K562 (cell line): ENCODE measurements at regions of chr17 and their contacts with region 1.

Region 1: GRCh38 chr17:3683054-3683511 is 12.9 kb downstream of the P2RX5 start:
- DNase-seq: peak; percentile 52 to 74 (median 65)
- ATAC-seq: peak; percentile 90
- H3K4me3 ChIP-seq: no peak overlapping the region
- H3K27ac ChIP-seq: no peak overlapping the region
- H3K4me1 ChIP-seq: peaks cover 0 to 21% of the 10 kb centered on the region in 2 experiments; a peak in 2 of 5 replicates
- H3K27me3 ChIP-seq: peaks cover 0 to 17% of the 10 kb centered on the region in 2 experiments; a peak in 2 of 5 replicates
- CTCF ChIP-seq: peak; percentile 69 to 89 (median 85)
- EP300 ChIP-seq: no peak
- POLR2A ChIP-seq: no peak
- RAD21 ChIP-seq: peak; percentile 65 to 72

Region 2: GRCh38 chr17:3048767-3049471 is 634.2 kb before region 1 on chr17:
- CTCF ChIA-PET with region 1: no interaction called
- POLR2A ChIA-PET with region 1: no interaction called
- in situ Hi-C with region 1: no loop called
- intact Hi-C with region 1: loop called (anchors 10 kb)
- DNase-seq: peak; percentile 58 to 68 (median 62)
- ATAC-seq: peak; percentile 99
- H3K4me3 ChIP-seq: no peak overlapping the region
- H3K27ac ChIP-seq: no peak overlapping the region
- H3K4me1 ChIP-seq: peaks cover 0 to 9% of the 10 kb centered on the region in 2 experiments; a peak in 2 of 5 replicates
- H3K27me3 ChIP-seq: 0 out of 5 replicates have a peak, but pooled peaks cover 0 to 5% of the 10 kb centered on the region in 2 experiments
- CTCF ChIP-seq: peak; percentile 48 to 52 (median 51)
- EP300 ChIP-seq: no peak
- POLR2A ChIP-seq: no peak
- RAD21 ChIP-seq: peak; percentile 42 to 57; a peak in 3 of 4 replicates

Region 3: GRCh38 chr17:3732210-3732621 is 49.1 kb after region 1 on chr17:
- CTCF ChIA-PET with region 1: no interaction called
- POLR2A ChIA-PET with region 1: no interaction called
- in situ Hi-C with region 1: loop called (anchors 5 kb)
- intact Hi-C with region 1: loop called (anchors 2 kb)
- DNase-seq: peak in 3 of 4 experiments; percentile 21 to 60 (median 48)
- ATAC-seq: peak; percentile 86
- H3K4me3 ChIP-seq: no peak overlapping the region
- H3K27ac ChIP-seq: no peak overlapping the region
- H3K4me1 ChIP-seq: no peaks in the 10 kb centered on the region; a peak in 2 of 5 replicates
- H3K27me3 ChIP-seq: no peaks in the 10 kb centered on the region
- CTCF ChIP-seq: peak; percentile 21 to 58 (median 55); a peak in 5 of 6 replicates
- EP300 ChIP-seq: no peak
- POLR2A ChIP-seq: no peak
- RAD21 ChIP-seq: peak; percentile 38 to 62

Region 4: GRCh38 chr17:3827124-3827773 is 144.2 kb after region 1 on chr17:
- CTCF ChIA-PET with region 1: interaction called, 3 read pairs
- POLR2A ChIA-PET with region 1: no interaction called
- in situ Hi-C with region 1: no loop called
- intact Hi-C with region 1: loop called (anchors 2 kb)
- DNase-seq: peak; percentile 32 to 67 (median 40)
- ATAC-seq: peak; percentile 39; the same call in 1 of the 3 replicates
- H3K4me3 ChIP-seq: no peak overlapping the region
- H3K27ac ChIP-seq: no peak overlapping the region
- H3K4me1 ChIP-seq: no peaks in the 10 kb centered on the region
- H3K27me3 ChIP-seq: no peaks in the 10 kb centered on the region
- CTCF ChIP-seq: peak; percentile 55 to 69 (median 68)
- EP300 ChIP-seq: no peak
- POLR2A ChIP-seq: no peak
- RAD21 ChIP-seq: peak; percentile 23 to 58; a peak in 3 of 4 replicates